Endothelial cell of umbilical vein (primary cell): ENCODE measurements at regions of chr1 and their contacts with region 1.

Region 1: DNA sequence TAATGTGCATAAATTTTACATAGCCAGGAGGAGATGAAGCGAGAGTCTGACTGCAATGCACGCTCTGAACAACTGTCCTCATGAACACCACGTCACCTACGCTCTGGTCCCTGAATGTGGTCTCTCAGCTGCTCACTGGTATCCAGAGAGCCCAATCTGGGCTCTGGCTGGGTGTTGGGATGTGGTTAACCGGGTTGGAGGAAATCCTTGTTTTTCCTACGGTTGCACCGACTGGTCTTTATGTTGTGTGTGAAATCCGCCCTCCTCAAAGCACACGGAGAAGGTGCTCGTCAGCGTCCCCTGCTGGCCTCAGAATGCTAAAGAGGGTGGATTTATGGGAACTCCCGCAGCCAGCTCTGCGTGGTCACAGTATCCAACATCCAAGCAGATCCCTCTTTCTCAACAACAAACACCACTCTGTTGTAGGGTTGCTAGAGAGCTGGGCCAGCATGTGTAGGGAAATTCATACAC is 51.8 kb upstream of the FAM89A start:
- DNase-seq: peak; percentile 61
- H3K4me3 ChIP-seq: no peak overlapping the region
- H3K27ac ChIP-seq: no peak overlapping the region
- H3K4me1 ChIP-seq: no peaks in the 10 kb centered on the region
- H3K27me3 ChIP-seq: peaks cover 7 to 13% of the 10 kb centered on the region in 2 experiments
- CTCF ChIP-seq: peak; percentile 71 to 73
- POLR2A ChIP-seq: no peak

Region 2: GRCh38 chr1:230797942-230798418 is 293.9 kb before region 1 on chr1:
- CTCF ChIA-PET with region 1: interaction called, 13 read pairs
- POLR2A ChIA-PET with region 1: no interaction called
- dilution Hi-C with region 1: no loop called
- intact Hi-C with region 1: loop called (anchors 1 kb)
- DNase-seq: peak; percentile 50
- H3K4me3 ChIP-seq: no peak overlapping the region
- H3K27ac ChIP-seq: no peak overlapping the region
- H3K4me1 ChIP-seq: no peaks in the 10 kb centered on the region
- H3K27me3 ChIP-seq: no peaks in the 10 kb centered on the region
- CTCF ChIP-seq: peak; percentile 39 to 65
- POLR2A ChIP-seq: no peak

Region 3: GRCh38 chr1:230922620-230923019 is 169.2 kb before region 1 on chr1:
- CTCF ChIA-PET with region 1: interaction called, 16 read pairs
- POLR2A ChIA-PET with region 1: no interaction called
- dilution Hi-C with region 1: no loop called
- intact Hi-C with region 1: loop called (anchors 1 kb)
- DNase-seq: no peak
- H3K4me3 ChIP-seq: no peak overlapping the region
- H3K27ac ChIP-seq: no peak overlapping the region
- H3K4me1 ChIP-seq: no peaks in the 10 kb centered on the region
- H3K27me3 ChIP-seq: no peaks in the 10 kb centered on the region
- CTCF ChIP-seq: peak in 1 of 2 donors; percentile 0
- POLR2A ChIP-seq: no peak

Region 4: GRCh38 chr1:231028682-231029081 is 63.2 kb before region 1 on chr1:
- CTCF ChIA-PET with region 1: interaction called, 8 read pairs
- POLR2A ChIA-PET with region 1: no interaction called
- dilution Hi-C with region 1: no loop called
- intact Hi-C with region 1: loop called (anchors 2 kb)
- DNase-seq: peak; percentile 89
- H3K4me3 ChIP-seq: no peak overlapping the region
- H3K27ac ChIP-seq: peak overlapping the region; percentile 45
- H3K4me1 ChIP-seq: peaks cover 16% of the 10 kb centered on the region
- H3K27me3 ChIP-seq: no peaks in the 10 kb centered on the region
- CTCF ChIP-seq: no peak
- POLR2A ChIP-seq: no peak

Region 5: GRCh38 chr1:231053493-231054162 is 38.2 kb before region 1 on chr1:
- CTCF ChIA-PET with region 1: interaction called, 13 read pairs
- POLR2A ChIA-PET with region 1: no interaction called
- dilution Hi-C with region 1: no loop called
- intact Hi-C with region 1: no loop called
- DNase-seq: peak; percentile 75
- H3K4me3 ChIP-seq: no peak overlapping the region
- H3K27ac ChIP-seq: no peak overlapping the region
- H3K4me1 ChIP-seq: no peaks in the 10 kb centered on the region
- H3K27me3 ChIP-seq: peaks cover 0 to 7% of the 10 kb centered on the region in 2 experiments
- CTCF ChIP-seq: no peak
- POLR2A ChIP-seq: no peak

Region 6: DNA sequence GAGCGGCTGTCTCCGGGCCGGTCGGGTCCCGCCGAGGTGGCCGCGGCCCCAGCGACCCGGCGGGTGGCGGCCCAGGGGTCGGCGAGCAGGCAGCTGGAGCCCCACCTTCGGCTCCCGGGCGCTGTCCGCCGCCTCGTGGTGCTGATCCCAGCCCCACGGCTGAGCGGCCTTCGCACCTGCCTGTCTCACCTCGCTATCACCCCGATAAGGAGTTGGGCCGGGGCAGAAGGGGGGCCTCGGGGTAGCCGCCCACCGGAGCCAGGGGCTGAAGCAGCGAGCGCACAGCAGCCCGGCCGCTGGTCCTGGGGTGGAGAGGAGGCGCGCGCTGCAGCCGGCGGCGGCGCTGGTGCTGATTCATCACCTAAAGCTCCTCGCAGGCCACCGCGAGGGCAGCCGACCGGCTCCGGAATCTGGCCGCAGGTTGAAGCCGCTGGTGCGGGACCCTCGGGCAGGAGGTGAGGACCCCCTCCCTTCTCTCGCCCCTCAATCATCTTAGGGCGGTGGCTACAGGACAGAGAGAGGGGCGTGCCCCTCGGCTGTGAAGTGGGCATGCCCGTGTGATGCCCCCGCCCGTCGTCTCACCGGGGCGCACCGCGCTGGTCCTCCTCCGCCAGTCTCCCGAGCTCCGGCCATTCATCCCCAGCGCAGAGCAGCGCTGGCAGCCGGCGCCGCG is 70.6 kb after region 1 on chr1:
- CTCF ChIA-PET with region 1: interaction called, 3 read pairs
- POLR2A ChIA-PET with region 1: no interaction called
- dilution Hi-C with region 1: no loop called
- intact Hi-C with region 1: loop called (anchors 2 kb)
- DNase-seq: peak; percentile 34
- H3K4me3 ChIP-seq: peak overlapping the region in 1 of 3 experiments; percentile 19
- H3K27ac ChIP-seq: no peak overlapping the region
- H3K4me1 ChIP-seq: no peaks in the 10 kb centered on the region
- H3K27me3 ChIP-seq: peaks cover 57 to 72% of the 10 kb centered on the region in 2 experiments
- CTCF ChIP-seq: no peak
- POLR2A ChIP-seq: no peak